GM12878 (cell line): ENCODE measurements at regions of chr14 and their contacts with region 1.

Region 1: GRCh38 chr14:20682435-20683124 is 1.8 kb upstream of the RNASE4 start:
- DNase-seq: no peak
- ATAC-seq: peak; percentile 74
- H3K4me3 ChIP-seq: peak overlapping the region; percentile 73
- H3K27ac ChIP-seq: peak overlapping the region; percentile 99
- H3K4me1 ChIP-seq: peaks cover 23% of the 10 kb centered on the region
- H3K27me3 ChIP-seq: no peaks in the 10 kb centered on the region
- CTCF ChIP-seq: no peak
- EP300 ChIP-seq: no peak
- POLR2A ChIP-seq: peak; percentile 87
- RAD21 ChIP-seq: no peak

Region 2: DNA sequence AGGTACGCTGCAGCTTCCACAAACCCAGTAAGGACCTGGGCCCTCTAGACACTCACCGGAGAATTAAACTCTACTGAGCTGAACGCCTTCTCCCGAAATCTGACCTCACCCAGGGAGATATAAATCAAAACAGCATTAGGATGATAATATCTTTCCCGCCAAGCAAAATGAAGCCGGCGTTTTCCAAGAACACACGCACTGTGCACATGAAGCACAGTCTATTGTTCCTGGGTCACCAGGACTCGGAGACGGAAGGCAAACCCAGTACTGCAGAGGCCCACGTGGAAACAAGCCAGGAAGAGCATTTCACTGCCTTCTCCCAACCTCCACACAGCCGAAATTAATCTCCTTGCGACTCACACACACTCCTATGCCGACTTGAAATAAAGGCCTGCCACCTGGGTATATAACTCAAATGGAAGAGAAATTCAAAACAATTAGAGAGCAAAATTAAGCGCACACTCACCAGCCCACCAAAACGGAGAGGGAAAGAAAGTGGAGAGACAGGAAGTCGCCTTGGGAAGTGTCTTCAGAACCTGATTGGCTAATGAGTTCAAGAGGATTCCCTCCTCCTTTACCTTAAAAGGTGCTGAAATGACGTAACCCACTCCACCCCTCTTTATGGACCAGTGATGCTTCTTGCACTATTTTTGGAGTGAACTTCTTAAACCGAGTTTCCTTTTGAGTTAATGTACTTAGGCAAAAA is 349.6 kb before region 1 on chr14 and contains the start of gene CCNB1IP1:
- CTCF ChIA-PET with region 1: interaction called, 24 read pairs
- POLR2A ChIA-PET with region 1: interaction called, 3 read pairs
- RAD21 ChIA-PET with region 1: interaction called, 10 read pairs
- SMC1A ChIA-PET with region 1: interaction called, 4 read pairs
- in situ Hi-C with region 1: loop called (anchors 5 kb)
- intact Hi-C with region 1: no loop called
- DNase-seq: peak; percentile 87
- ATAC-seq: peak; percentile 95
- H3K4me3 ChIP-seq: peak within 1 kb of the TSS; percentile 82
- H3K27ac ChIP-seq: peak within 1 kb of the TSS; percentile 85
- H3K4me1 ChIP-seq: peaks cover 6% of the 10 kb centered on the region; the same call in 1 of the 2 replicates
- H3K27me3 ChIP-seq: no peaks in the 10 kb centered on the region
- CTCF ChIP-seq: no peak
- EP300 ChIP-seq: no peak; a peak in 1 of 4 replicates
- POLR2A ChIP-seq: peak; percentile 56; the same call in 1 of the 2 replicates
- RAD21 ChIP-seq: no peak
- polyA plus RNA-seq, gene CCNB1IP1: 69.2 to 80.6 TPM

Region 3: GRCh38 chr14:20461274-20462001 is 221.1 kb before region 1 on chr14 and contains the start of gene PIP4P1:
- CTCF ChIA-PET with region 1: interaction called, 3 read pairs
- POLR2A ChIA-PET with region 1: interaction called, 7 read pairs
- RAD21 ChIA-PET with region 1: interaction called, 3 read pairs
- SMC1A ChIA-PET with region 1: interaction called, 3 read pairs
- in situ Hi-C with region 1: loop called (anchors 5 kb)
- intact Hi-C with region 1: loop called (anchors 5 kb)
- DNase-seq: peak; percentile 100
- ATAC-seq: peak; percentile 96
- H3K4me3 ChIP-seq: peak within 1 kb of the TSS; percentile 73
- H3K27ac ChIP-seq: peak within 1 kb of the TSS; percentile 87
- H3K4me1 ChIP-seq: peaks cover 6% of the 10 kb centered on the region
- H3K27me3 ChIP-seq: no peaks in the 10 kb centered on the region
- CTCF ChIP-seq: no peak
- EP300 ChIP-seq: no peak
- POLR2A ChIP-seq: peak; percentile 78
- RAD21 ChIP-seq: no peak
- polyA plus RNA-seq, gene PIP4P1: 19.1 to 41.6 TPM

Region 4: GRCh38 chr14:20632682-20633428 is 49.7 kb before region 1 on chr14:
- CTCF ChIA-PET with region 1: interaction called, 11 read pairs
- POLR2A ChIA-PET with region 1: interaction called, 7 read pairs
- RAD21 ChIA-PET with region 1: interaction called, 38 read pairs
- SMC1A ChIA-PET with region 1: interaction called, 49 read pairs
- in situ Hi-C with region 1: loop called (anchors 5 kb)
- intact Hi-C with region 1: loop called (anchors 1 kb)
- DNase-seq: peak; percentile 76
- ATAC-seq: peak; percentile 77
- H3K4me3 ChIP-seq: peak overlapping the region; percentile 88; the same call in 1 of the 2 replicates
- H3K27ac ChIP-seq: no peak overlapping the region
- H3K4me1 ChIP-seq: peaks cover 7% of the 10 kb centered on the region; the same call in 1 of the 2 replicates
- H3K27me3 ChIP-seq: peaks cover 0 to 2% of the 10 kb centered on the region in 2 experiments; a peak in 1 of 4 replicates
- CTCF ChIP-seq: no peak
- EP300 ChIP-seq: peak in 1 of 2 experiments; percentile 44; a peak in 1 of 4 replicates
- POLR2A ChIP-seq: no peak
- RAD21 ChIP-seq: no peak

Region 5: GRCh38 chr14:20662968-20663732 is 19.4 kb before region 1 on chr14:
- CTCF ChIA-PET with region 1: interaction called, 214 read pairs
- POLR2A ChIA-PET with region 1: interaction called, 69 read pairs
- RAD21 ChIA-PET with region 1: interaction called, 156 read pairs
- SMC1A ChIA-PET with region 1: interaction called, 150 read pairs
- in situ Hi-C with region 1: no loop called
- intact Hi-C with region 1: loop called (anchors 1 kb)
- DNase-seq: peak; percentile 88
- ATAC-seq: peak; percentile 73
- H3K4me3 ChIP-seq: peak overlapping the region; percentile 83
- H3K27ac ChIP-seq: peak overlapping the region; percentile 20; the same call in 1 of the 2 replicates
- H3K4me1 ChIP-seq: peaks cover 20% of the 10 kb centered on the region
- H3K27me3 ChIP-seq: no peaks in the 10 kb centered on the region
- CTCF ChIP-seq: peak; percentile 72 to 84 (median 77)
- EP300 ChIP-seq: peak in 1 of 2 experiments; percentile 45; a peak in 1 of 4 replicates
- POLR2A ChIP-seq: 0 out of 2 replicates have a peak, but pooled peaks have one; percentile 32
- RAD21 ChIP-seq: peak; percentile 75